ENCODE measurements at regions of chr11 and their contacts with region 1.

Region 1: GRCh38 chr11:36041988-36042611 is 98.2 kb downstream of the LDLRAD3 start:
- DNase-seq: no peak

Region 2: GRCh38 chr11:36077886-36078685 is 36.0 kb after region 1 on chr11:
- intact Hi-C with region 1: no loop called
- DNase-seq: no peak

Region 3: GRCh38 chr11:36258730-36259360 is 216.7 kb after region 1 on chr11:
- intact Hi-C with region 1: loop called (anchors 5 kb)
- DNase-seq: no peak